PC-9 (cell line): ENCODE measurements at regions of chr9 and their contacts with region 1.

Region 1: DNA sequence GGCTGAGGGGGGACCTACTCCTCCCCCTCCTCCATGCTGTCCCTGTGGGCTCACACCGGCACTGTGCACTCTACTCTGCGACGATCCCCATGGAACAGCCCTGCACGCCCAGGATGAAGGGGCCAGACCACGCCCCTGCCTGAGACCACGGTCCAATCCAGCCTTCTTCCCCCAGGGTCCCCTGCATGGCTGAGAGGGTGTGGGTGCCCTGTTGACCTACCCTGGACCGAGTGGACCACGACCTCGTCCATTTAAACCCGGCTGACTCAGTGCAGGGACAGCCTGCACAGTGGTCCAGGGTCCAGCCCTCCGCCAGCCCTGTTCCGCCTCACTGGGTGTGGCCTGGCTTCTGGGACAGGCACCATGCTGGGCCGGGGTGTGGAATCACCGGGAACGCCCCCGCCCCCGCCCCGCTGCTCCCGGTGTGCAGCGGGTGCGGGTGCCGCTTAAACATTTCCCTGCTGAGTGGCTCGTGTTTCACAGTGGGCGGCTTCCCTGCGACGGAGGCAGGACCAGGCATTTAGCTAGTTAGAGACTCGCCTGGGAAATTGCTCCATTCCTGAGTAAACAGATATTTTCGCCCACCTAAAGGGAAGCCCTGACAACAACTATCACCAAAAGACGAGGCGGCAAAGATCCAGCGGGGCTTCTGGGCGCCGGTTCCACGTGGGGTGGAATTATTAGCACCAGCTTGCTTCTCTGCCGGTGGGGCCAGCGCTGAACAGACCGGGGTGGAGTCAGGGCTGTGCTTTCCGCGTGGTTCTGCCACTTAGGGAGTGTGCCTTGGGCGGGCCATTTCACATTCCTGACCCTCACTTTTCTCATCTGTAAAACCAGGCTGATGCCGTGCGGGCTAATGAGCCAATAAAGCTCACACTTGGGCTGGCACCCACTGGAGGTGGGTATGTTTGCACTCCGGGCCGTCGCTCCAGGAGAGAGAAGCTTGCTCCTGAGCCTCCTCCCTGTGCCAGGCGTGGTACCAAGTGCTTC is 22.6 kb downstream of the DBH start:
- DNase-seq: peak in 1 of 2 experiments; percentile 55
- H3K4me3 ChIP-seq: no peak overlapping the region
- H3K27ac ChIP-seq: no peak overlapping the region
- H3K4me1 ChIP-seq: no peaks in the 10 kb centered on the region
- H3K27me3 ChIP-seq: peaks cover 99% of the 10 kb centered on the region
- CTCF ChIP-seq: no peak

Region 2: GRCh38 chr9:133545494-133546286 is 113.0 kb before region 1 on chr9:
- CTCF ChIA-PET with region 1: no interaction called
- POLR2A ChIA-PET with region 1: no interaction called
- intact Hi-C with region 1: no loop called
- DNase-seq: no peak
- H3K4me3 ChIP-seq: no peak overlapping the region
- H3K27ac ChIP-seq: no peak overlapping the region
- H3K4me1 ChIP-seq: no peaks in the 10 kb centered on the region
- H3K27me3 ChIP-seq: peaks cover 88% of the 10 kb centered on the region
- CTCF ChIP-seq: no peak

Region 3: GRCh38 chr9:133677126-133678010 is 18.6 kb after region 1 on chr9:
- CTCF ChIA-PET with region 1: no interaction called
- POLR2A ChIA-PET with region 1: no interaction called
- intact Hi-C with region 1: no loop called
- DNase-seq: no peak
- H3K4me3 ChIP-seq: no peak overlapping the region
- H3K27ac ChIP-seq: no peak overlapping the region
- H3K4me1 ChIP-seq: no peaks in the 10 kb centered on the region
- H3K27me3 ChIP-seq: peaks cover 99% of the 10 kb centered on the region
- CTCF ChIP-seq: no peak

Region 4: GRCh38 chr9:133714606-133715294 is 56.0 kb after region 1 on chr9:
- CTCF ChIA-PET with region 1: no interaction called
- POLR2A ChIA-PET with region 1: no interaction called
- intact Hi-C with region 1: loop called (anchors 5 kb)
- DNase-seq: peak in 1 of 2 experiments; percentile 70
- H3K4me3 ChIP-seq: no peak overlapping the region
- H3K27ac ChIP-seq: no peak overlapping the region
- H3K4me1 ChIP-seq: no peaks in the 10 kb centered on the region
- H3K27me3 ChIP-seq: peaks cover 51% of the 10 kb centered on the region
- CTCF ChIP-seq: no peak

Region 5: GRCh38 chr9:133737774-133738639 is 79.3 kb after region 1 on chr9 and contains the start of gene SARDH:
- CTCF ChIA-PET with region 1: no interaction called
- POLR2A ChIA-PET with region 1: no interaction called
- intact Hi-C with region 1: no loop called
- DNase-seq: peak; percentile 39 to 69
- H3K4me3 ChIP-seq: peak within 1 kb of the TSS; percentile 33; the same call in 1 of the 2 replicates
- H3K27ac ChIP-seq: no peak within 1 kb of the TSS
- H3K4me1 ChIP-seq: no peaks in the 10 kb centered on the region
- H3K27me3 ChIP-seq: peaks cover 33% of the 10 kb centered on the region; the same call in 1 of the 2 replicates
- CTCF ChIP-seq: no peak
- total RNA-seq, gene SARDH: 9.9 and 11.3 TPM in 2 replicates